ENCODE measurements at regions of chr5 and their contacts with region 1.

Region 1: DNA sequence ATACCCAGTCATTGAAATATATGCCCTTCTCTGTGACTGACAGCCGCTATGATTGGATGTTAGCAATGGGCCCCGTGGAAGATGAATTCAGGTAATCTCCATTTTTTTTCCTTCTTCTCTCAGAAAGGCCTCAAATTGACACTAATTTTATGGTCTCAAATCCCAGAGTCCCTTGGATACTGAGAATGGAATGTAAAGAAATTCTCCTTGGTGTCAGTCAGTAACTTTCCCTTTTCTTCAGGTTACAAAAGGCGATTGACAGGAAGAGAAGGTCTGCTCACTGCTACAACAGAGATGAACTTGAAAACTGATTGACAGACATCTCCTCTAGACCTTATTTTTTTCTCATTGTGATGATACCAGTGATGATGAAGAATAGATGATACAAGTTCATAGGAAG is 748.3 kb downstream of the MAT2B start:
- DNase-seq: no peak
- H3K4me3 ChIP-seq: no peak overlapping the region
- H3K27ac ChIP-seq: no peak overlapping the region
- H3K4me1 ChIP-seq: no peaks in the 10 kb centered on the region
- H3K27me3 ChIP-seq: no peaks in the 10 kb centered on the region
- CTCF ChIP-seq: no peak
- POLR2A ChIP-seq: no peak

Region 2: GRCh38 chr5:163908253-163908652 is 345.5 kb before region 1 on chr5:
- intact Hi-C with region 1: no loop called
- DNase-seq: no peak
- H3K4me3 ChIP-seq: no peak overlapping the region
- H3K27ac ChIP-seq: no peak overlapping the region
- H3K4me1 ChIP-seq: no peaks in the 10 kb centered on the region
- H3K27me3 ChIP-seq: no peaks in the 10 kb centered on the region
- CTCF ChIP-seq: no peak
- POLR2A ChIP-seq: no peak

Region 3: DNA sequence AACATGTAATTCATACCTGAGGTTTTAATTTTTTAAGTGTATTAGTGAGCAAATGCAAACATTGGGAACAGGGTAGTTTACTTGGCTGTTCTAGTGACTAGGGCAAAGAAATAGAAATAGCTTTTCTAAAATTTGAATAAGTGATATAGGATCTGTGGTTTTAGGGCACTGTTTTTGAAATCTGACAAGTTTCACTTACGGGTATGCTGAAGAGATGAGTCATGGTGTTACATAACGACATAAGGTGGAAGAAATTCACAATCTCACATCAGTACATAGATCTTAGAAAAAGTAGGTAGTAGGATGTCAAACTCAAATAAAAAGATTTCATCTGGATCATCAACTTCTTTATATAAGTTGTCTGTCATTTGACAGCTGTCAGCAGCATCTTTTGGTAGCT is 24.0 kb after region 1 on chr5:
- intact Hi-C with region 1: loop called (anchors 2 kb)
- DNase-seq: no peak
- H3K4me3 ChIP-seq: no peak overlapping the region
- H3K27ac ChIP-seq: no peak overlapping the region
- H3K4me1 ChIP-seq: no peaks in the 10 kb centered on the region
- H3K27me3 ChIP-seq: no peaks in the 10 kb centered on the region
- CTCF ChIP-seq: no peak
- POLR2A ChIP-seq: no peak

Region 4: DNA sequence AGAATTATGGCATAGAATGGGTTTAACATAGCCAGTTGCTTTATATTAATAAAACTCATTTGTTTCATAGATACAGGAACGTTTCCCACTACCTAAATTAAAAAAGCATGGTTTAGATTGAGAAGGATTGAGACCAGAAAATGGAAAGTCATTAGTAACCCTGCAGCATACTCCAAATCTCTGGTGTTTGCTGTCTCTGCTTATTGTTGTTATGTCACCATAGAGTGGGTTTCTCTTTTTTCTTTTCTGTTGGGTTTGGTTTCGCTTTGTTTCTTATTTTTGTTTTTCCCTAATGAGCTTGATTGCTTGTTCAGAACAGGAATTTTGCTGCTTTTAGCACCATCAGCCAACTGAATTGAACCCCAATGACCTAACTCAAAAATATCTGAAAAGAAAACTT is 286.4 kb after region 1 on chr5:
- intact Hi-C with region 1: no loop called
- DNase-seq: no peak
- H3K4me3 ChIP-seq: no peak overlapping the region
- H3K27ac ChIP-seq: no peak overlapping the region
- H3K4me1 ChIP-seq: no peaks in the 10 kb centered on the region
- H3K27me3 ChIP-seq: no peaks in the 10 kb centered on the region
- CTCF ChIP-seq: no peak
- POLR2A ChIP-seq: no peak